HepG2 (cell line): ENCODE measurements at regions of chr7 and their contacts with region 1.

Region 1: DNA sequence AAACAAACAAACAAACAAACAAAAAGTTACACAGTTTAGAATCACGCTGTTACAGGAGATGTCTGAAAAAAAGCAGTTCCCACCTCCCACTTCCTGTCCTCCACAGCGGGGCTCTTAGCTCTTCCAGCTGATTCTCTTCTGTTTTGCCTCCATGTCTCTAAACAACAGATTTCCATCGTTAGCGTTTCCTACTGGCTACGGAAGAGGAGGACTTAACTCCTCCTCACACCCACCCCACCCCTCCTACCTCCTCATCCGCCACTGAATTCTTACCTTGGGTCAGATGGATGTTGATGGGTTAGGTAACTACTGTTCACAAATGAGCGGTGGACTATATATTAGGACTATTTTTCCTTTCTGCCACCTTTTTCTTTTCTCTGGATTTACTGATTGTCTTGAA is 36.8 kb upstream of the NUB1 start:
- DNase-seq: no peak
- ATAC-seq: no peak
- H3K4me3 ChIP-seq: no peak overlapping the region
- H3K27ac ChIP-seq: no peak overlapping the region
- H3K4me1 ChIP-seq: no peaks in the 10 kb centered on the region
- H3K27me3 ChIP-seq: peaks cover 5 to 62% of the 10 kb centered on the region in 2 experiments; a peak in 3 of 5 replicates
- CTCF ChIP-seq: no peak
- EP300 ChIP-seq: no peak
- POLR2A ChIP-seq: no peak
- RAD21 ChIP-seq: no peak

Region 2: DNA sequence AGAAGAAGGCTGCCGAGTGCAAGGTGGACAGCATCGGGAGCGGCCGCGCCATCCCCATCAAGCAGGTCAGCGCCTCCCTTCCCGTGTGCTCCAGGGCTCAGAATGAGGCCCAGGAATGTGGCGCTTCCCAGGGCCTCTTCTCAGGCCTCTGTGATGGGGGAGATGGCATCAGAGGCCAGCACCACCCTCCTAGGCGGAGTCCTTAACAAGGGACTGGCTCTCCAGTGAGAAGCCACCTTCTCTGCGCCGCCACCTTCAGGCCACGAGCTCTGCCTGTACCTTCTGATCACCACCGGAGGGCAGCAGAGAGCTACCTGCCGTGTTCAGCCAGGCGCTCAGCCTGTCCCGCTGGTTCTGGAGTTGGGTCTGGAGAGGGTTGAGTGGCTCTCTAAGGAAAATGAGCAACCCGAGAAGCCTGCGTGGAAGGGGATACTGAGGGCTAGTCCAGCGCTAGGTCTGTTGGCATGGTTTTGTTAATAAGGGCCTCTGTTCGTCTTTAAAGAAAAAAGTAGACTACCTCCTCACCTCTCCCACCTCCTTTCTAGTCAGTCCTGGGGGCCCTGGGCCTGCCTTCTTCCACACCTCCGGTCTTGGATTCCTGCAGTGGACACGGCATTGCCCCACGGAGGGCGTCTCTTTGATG is 180.9 kb before region 1 on chr7:
- CTCF ChIA-PET with region 1: interaction called, 16 read pairs
- POLR2A ChIA-PET with region 1: no interaction called
- in situ Hi-C with region 1: loop called (anchors 10 kb)
- intact Hi-C with region 1: no loop called
- DNase-seq: peak; percentile 65
- ATAC-seq: peak; percentile 92
- H3K4me3 ChIP-seq: no peak overlapping the region
- H3K27ac ChIP-seq: no peak overlapping the region
- H3K4me1 ChIP-seq: no peaks in the 10 kb centered on the region
- H3K27me3 ChIP-seq: no peaks in the 10 kb centered on the region
- CTCF ChIP-seq: peak; percentile 98
- EP300 ChIP-seq: no peak
- POLR2A ChIP-seq: no peak
- RAD21 ChIP-seq: peak; percentile 84

Region 3: DNA sequence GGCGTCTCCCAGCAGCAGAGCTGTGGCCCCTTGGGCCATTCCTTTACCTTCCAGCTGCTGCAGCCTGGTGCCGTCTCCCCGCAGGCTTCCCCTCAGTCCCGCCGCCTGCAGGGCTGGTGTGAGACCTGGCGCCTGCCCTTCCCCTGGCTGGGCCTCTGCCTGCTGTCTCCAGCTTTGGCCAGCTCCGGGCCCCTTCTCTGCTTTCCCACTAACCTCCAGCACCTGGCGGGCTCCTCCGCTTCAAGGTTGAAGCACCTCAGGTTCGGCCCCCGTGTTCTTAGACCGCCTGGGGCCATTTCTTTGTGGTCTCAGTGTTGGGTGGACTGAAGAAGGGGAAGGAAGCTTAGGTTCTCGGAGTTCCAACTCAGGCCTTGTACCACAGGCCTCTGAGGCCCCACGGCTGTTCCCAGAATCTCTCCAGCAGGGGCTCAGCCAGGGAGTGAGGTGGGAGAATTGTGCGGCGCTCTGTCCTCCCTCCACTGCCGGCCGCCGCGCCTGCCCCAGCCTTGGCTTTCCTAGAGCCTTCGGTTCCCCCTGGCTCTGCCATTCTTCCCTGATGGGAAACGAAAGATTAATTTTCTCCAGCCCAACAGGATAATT is 167.7 kb before region 1 on chr7:
- CTCF ChIA-PET with region 1: no interaction called
- POLR2A ChIA-PET with region 1: no interaction called
- in situ Hi-C with region 1: no loop called
- intact Hi-C with region 1: loop called (anchors 10 kb)
- DNase-seq: no peak
- ATAC-seq: no peak
- H3K4me3 ChIP-seq: no peak overlapping the region
- H3K27ac ChIP-seq: no peak overlapping the region
- H3K4me1 ChIP-seq: no peaks in the 10 kb centered on the region
- H3K27me3 ChIP-seq: no peaks in the 10 kb centered on the region
- CTCF ChIP-seq: no peak
- EP300 ChIP-seq: no peak
- POLR2A ChIP-seq: no peak
- RAD21 ChIP-seq: no peak

Region 4: GRCh38 chr7:151172273-151173141 is 132.3 kb before region 1 on chr7:
- CTCF ChIA-PET with region 1: interaction called, 8 read pairs
- POLR2A ChIA-PET with region 1: no interaction called
- in situ Hi-C with region 1: no loop called
- intact Hi-C with region 1: loop called (anchors 10 kb)
- DNase-seq: peak; percentile 53
- ATAC-seq: peak; percentile 69
- H3K4me3 ChIP-seq: no peak overlapping the region
- H3K27ac ChIP-seq: no peak overlapping the region
- H3K4me1 ChIP-seq: no peaks in the 10 kb centered on the region
- H3K27me3 ChIP-seq: peaks cover 2 to 45% of the 10 kb centered on the region in 2 experiments; a peak in 4 of 5 replicates
- CTCF ChIP-seq: peak; percentile 100
- EP300 ChIP-seq: no peak
- POLR2A ChIP-seq: no peak
- RAD21 ChIP-seq: peak; percentile 95

Region 5: DNA sequence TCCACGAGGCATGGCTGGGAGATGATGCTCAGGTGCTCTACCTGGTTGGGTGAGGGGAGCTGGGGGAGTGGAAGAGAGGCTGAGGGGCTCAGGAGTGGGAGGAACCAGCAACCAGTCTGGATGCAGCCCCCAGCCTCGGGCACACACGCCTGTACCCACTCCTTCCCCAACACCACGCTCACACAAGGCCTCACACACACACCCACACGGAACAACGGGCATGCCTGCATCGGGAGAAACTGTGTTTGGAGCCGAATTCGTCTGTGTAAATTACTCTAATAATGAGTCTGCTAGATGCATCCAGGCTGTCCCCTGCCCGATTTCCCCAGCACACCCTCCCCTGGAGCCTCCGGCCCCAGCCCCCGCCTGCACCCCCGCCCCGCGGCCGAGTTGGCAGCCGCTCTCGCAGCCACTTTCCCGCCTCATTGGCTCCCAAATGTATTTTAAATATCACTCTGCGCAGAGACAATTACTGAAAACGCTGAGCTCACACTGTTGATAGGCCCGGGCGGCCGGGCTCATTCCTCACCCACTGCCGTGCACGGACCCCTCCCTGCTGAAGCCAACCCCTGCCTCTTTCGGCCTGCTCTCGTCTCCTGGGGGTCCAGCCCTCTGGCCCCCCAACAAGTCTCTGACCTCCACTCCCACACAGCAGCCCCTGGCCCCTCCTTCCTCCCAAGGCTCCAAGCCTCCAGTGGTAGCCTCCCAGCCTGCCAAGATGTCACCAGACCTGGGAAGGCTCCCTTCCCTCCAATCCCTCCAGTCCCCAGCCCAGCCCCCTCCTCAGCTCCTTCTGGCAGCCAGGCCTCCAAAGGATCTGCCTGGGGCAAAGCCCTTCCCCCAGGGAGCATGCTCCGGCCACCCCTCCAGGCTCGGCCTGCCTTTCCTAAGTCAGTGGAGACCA is 105.7 kb before region 1 on chr7:
- CTCF ChIA-PET with region 1: no interaction called
- POLR2A ChIA-PET with region 1: no interaction called
- in situ Hi-C with region 1: loop called (anchors 10 kb)
- intact Hi-C with region 1: no loop called
- DNase-seq: no peak
- ATAC-seq: no peak
- H3K4me3 ChIP-seq: no peak overlapping the region
- H3K27ac ChIP-seq: no peak overlapping the region
- H3K4me1 ChIP-seq: no peaks in the 10 kb centered on the region
- H3K27me3 ChIP-seq: peaks cover 13 to 92% of the 10 kb centered on the region in 2 experiments
- CTCF ChIP-seq: no peak
- EP300 ChIP-seq: no peak
- POLR2A ChIP-seq: no peak
- RAD21 ChIP-seq: no peak

Region 6: GRCh38 chr7:151244196-151244840 is 60.5 kb before region 1 on chr7:
- CTCF ChIA-PET with region 1: interaction called, 18 read pairs
- POLR2A ChIA-PET with region 1: no interaction called
- in situ Hi-C with region 1: no loop called
- intact Hi-C with region 1: no loop called
- DNase-seq: no peak
- ATAC-seq: no peak
- H3K4me3 ChIP-seq: peak overlapping the region in 1 of 3 experiments; percentile 66; a peak in 1 of 6 replicates
- H3K27ac ChIP-seq: no peak overlapping the region
- H3K4me1 ChIP-seq: peaks cover 68% of the 10 kb centered on the region
- H3K27me3 ChIP-seq: peaks cover 7 to 40% of the 10 kb centered on the region in 2 experiments; a peak in 3 of 5 replicates
- CTCF ChIP-seq: peak; percentile 66
- EP300 ChIP-seq: no peak
- POLR2A ChIP-seq: no peak
- RAD21 ChIP-seq: no peak

Region 7: DNA sequence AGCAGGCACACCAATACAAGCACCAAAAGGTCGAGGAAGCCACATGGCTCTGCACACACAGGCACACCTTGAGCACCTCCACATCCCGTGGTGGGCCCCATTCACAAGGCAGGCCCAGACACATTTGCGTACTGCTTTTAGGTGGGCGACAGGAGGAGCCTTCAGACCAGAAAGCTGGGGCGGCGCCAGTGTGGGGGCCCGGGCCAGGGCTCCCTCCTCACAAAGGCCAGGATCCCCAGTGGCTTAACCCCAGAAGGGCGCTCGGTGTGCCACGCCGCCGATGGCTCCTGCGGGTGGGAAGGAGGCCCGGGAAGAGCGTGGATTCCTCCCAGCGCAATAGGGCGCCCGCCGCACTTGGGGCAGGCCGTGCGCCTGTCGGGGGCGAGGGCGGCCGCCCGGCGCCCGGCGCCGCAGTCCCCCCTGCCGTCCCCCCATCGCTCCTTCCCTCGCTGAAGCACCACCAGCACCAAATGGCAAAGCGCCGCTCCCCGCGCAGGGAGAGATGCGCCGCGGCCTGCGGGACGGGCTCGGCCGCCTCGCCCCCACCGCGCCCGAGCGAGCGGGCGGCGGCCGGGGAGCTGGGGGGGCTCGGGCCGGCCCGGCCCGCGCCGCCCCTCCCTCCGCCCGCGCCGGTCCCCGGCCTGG is 53.4 kb before region 1 on chr7:
- CTCF ChIA-PET with region 1: no interaction called
- POLR2A ChIA-PET with region 1: no interaction called
- in situ Hi-C with region 1: loop called (anchors 5 kb)
- intact Hi-C with region 1: loop called (anchors 2 kb)
- DNase-seq: no peak
- ATAC-seq: no peak
- H3K4me3 ChIP-seq: peak overlapping the region; percentile 28 to 68 (median 49); a peak in 4 of 6 replicates
- H3K27ac ChIP-seq: no peak overlapping the region
- H3K4me1 ChIP-seq: peaks cover 51% of the 10 kb centered on the region
- H3K27me3 ChIP-seq: peaks cover 21 to 87% of the 10 kb centered on the region in 2 experiments
- CTCF ChIP-seq: no peak
- EP300 ChIP-seq: no peak
- POLR2A ChIP-seq: no peak
- RAD21 ChIP-seq: no peak

Region 8: GRCh38 chr7:151341357-151342101 is 36.7 kb after region 1 on chr7 and contains the start of gene NUB1:
- CTCF ChIA-PET with region 1: no interaction called
- POLR2A ChIA-PET with region 1: no interaction called
- in situ Hi-C with region 1: no loop called
- intact Hi-C with region 1: no loop called
- DNase-seq: peak; percentile 74
- ATAC-seq: peak; percentile 91
- H3K4me3 ChIP-seq: peak within 1 kb of the TSS; percentile 70 to 99 (median 79)
- H3K27ac ChIP-seq: peak within 1 kb of the TSS; percentile 72
- H3K4me1 ChIP-seq: peaks cover 51% of the 10 kb centered on the region
- H3K27me3 ChIP-seq: no peaks in the 10 kb centered on the region
- CTCF ChIP-seq: no peak; the same call in 1 of the 2 replicates
- EP300 ChIP-seq: 0 out of 4 replicates have a peak, but pooled peaks of 1 of the 2 experiments have one; percentile 32
- POLR2A ChIP-seq: peak; percentile 65 to 91
- RAD21 ChIP-seq: no peak
- total RNA-seq, gene NUB1: 37.0 and 47.3 TPM in 2 replicates

Region 9: DNA sequence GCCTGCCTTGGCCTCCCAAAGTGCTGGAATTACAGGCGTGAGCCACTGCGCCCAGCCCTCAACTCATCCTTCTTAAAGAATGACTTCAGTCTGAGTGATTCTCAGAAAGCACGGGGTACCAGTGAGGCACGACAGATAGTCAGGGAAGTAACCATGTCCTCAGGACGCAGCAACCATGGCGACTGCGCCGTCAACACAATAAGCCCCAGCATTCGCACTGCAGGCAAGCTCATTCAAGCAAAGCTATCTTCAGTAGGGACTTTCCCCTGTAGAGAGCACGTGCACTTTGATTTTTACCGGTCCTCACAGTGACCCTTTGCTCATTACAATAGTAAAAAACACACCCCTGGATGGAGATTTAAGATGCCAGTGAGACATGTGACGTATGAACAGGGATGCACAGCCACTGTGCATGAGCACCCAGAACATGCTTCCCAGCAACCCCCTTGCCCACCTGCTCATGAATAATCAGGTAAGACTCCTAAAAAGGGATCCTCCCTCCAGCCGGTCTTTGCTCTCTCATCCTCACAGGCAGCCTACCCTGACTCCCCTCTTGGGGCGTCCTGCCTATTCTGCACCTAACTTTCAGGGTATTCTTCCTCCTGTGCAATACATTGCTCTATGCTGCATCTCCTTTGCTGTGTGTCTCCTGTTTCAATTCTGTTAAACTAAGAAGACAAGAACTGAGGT is 95.9 kb after region 1 on chr7:
- CTCF ChIA-PET with region 1: no interaction called
- POLR2A ChIA-PET with region 1: no interaction called
- in situ Hi-C with region 1: no loop called
- intact Hi-C with region 1: no loop called
- DNase-seq: no peak
- ATAC-seq: no peak
- H3K4me3 ChIP-seq: no peak overlapping the region
- H3K27ac ChIP-seq: no peak overlapping the region
- H3K4me1 ChIP-seq: peaks cover 26% of the 10 kb centered on the region
- H3K27me3 ChIP-seq: peaks cover 1 to 51% of the 10 kb centered on the region in 2 experiments; a peak in 3 of 5 replicates
- CTCF ChIP-seq: no peak
- EP300 ChIP-seq: no peak
- POLR2A ChIP-seq: no peak
- RAD21 ChIP-seq: no peak

Region 10: GRCh38 chr7:151637781-151638261 is 333.0 kb after region 1 on chr7:
- CTCF ChIA-PET with region 1: no interaction called
- POLR2A ChIA-PET with region 1: no interaction called
- in situ Hi-C with region 1: no loop called
- intact Hi-C with region 1: no loop called
- DNase-seq: no peak
- ATAC-seq: no peak
- H3K4me3 ChIP-seq: no peak overlapping the region
- H3K27ac ChIP-seq: no peak overlapping the region
- H3K4me1 ChIP-seq: no peaks in the 10 kb centered on the region
- H3K27me3 ChIP-seq: no peaks in the 10 kb centered on the region; a peak in 1 of 5 replicates
- CTCF ChIP-seq: no peak
- EP300 ChIP-seq: no peak
- POLR2A ChIP-seq: no peak
- RAD21 ChIP-seq: no peak